Activated naive CD4-positive, alpha-beta T cell treated with anti-CD3 and anti-CD28 coated beads for 36 hours (primary cell): ENCODE measurements at regions of chr2 and their contacts with region 1.

Region 1: GRCh38 chr2:28452534-28453081 is 43.3 kb upstream of the PLB1 start:
- DNase-seq: peak; percentile 91
- H3K4me3 Mint-ChIP-seq: no peak overlapping the region
- H3K27ac Mint-ChIP-seq: no peak overlapping the region
- H3K4me1 Mint-ChIP-seq: peaks cover 36% of the 10 kb centered on the region
- H3K27me3 Mint-ChIP-seq: no peaks in the 10 kb centered on the region

Region 2: GRCh38 chr2:27723372-27724144 is 729.0 kb before region 1 on chr2:
- CTCF ChIA-PET with region 1: interaction called, 5 read pairs
- intact Hi-C with region 1: loop called (anchors 1 kb)
- DNase-seq: peak; percentile 53
- H3K4me3 Mint-ChIP-seq: no peak overlapping the region
- H3K27ac Mint-ChIP-seq: no peak overlapping the region
- H3K4me1 Mint-ChIP-seq: peaks cover 24% of the 10 kb centered on the region
- H3K27me3 Mint-ChIP-seq: no peaks in the 10 kb centered on the region

Region 3: DNA sequence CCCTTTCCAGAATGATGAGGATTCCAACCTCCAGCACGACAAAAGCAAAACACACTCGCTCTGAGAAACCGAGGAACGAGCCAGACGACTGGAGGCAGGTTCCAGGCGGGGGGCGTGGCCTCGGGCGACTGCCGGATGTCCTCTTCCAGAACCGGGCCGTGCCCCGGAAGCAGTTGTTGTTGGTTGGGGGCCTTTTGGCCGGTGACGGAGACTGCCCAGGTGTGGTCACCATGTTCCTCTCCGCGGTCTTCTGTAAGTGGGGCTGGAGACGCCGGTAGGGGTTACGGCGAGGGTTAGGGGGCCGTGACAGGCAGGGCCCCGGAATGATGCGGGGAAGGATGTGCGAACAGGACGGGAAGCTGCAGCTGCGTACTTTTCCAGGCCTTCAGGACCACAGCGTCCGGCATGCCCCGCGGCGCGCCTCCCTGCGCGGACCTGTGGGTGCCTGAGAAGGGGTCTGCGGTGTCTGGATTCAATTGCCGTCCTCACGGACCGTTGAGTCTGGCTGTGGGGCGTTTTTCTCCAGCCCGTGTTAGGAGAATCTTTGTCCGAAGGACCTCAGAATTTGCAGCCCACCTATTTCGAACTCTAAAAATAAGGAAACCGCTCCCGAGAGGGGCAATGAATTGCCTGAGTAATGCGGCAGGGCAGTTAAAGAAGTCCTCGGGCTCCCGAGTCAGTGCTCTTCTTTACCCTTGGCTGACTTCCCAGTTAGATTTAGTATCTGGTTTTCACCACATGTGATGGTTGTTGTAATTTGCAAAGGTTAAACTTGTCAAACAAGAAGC is 680.9 kb before region 1 on chr2 and contains the start of gene MRPL33:
- CTCF ChIA-PET with region 1: no interaction called
- intact Hi-C with region 1: loop called (anchors 5 kb)
- DNase-seq: peak; percentile 95
- H3K4me3 Mint-ChIP-seq: peak within 1 kb of the TSS; percentile 98
- H3K27ac Mint-ChIP-seq: peak within 1 kb of the TSS; percentile 98
- H3K4me1 Mint-ChIP-seq: peaks cover 36% of the 10 kb centered on the region
- H3K27me3 Mint-ChIP-seq: no peaks in the 10 kb centered on the region
- total RNA-seq, gene MRPL33: 57.4 to 60.5 TPM

Region 4: GRCh38 chr2:28096421-28096820 is 356.2 kb before region 1 on chr2:
- CTCF ChIA-PET with region 1: no interaction called
- intact Hi-C with region 1: loop called (anchors 10 kb)
- DNase-seq: no peak
- H3K4me3 Mint-ChIP-seq: no peak overlapping the region
- H3K27ac Mint-ChIP-seq: no peak overlapping the region
- H3K4me1 Mint-ChIP-seq: no peaks in the 10 kb centered on the region
- H3K27me3 Mint-ChIP-seq: no peaks in the 10 kb centered on the region

Region 5: DNA sequence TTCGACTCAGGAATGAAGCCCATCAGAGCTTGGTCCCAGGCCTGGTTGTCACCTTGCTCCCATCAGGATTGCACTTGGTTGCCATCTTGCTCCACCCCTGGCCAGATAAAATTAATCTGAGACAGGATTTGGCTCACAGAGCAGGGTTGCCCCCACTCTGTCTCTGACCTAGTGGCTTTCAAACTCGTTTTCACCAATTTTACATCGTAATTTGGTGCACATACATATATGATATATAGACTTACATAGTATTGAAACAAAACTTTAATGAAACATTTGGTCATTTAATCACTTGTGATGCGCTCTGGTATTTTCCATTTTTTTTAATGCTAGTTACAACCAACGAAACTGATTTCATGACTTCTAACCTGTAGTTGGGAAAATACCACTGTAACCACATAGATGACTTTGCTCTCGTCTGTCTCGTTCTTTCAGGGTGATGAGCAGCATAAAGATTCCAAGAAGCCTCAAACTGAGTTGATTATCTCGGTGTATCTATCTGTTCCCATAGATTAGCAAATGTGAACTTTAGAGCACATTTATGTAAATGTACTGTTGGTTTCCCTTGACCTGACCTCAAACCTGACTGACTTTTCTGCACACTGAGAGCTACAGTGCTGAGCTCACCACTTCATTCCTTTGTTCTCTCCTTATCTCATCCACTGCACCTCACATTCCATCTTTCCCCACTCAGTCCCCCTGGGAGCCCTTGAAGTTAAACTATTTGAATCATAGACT is 12.7 kb after region 1 on chr2:
- CTCF ChIA-PET with region 1: interaction called, 5 read pairs
- intact Hi-C with region 1: loop called (anchors 1 kb)
- DNase-seq: no peak
- H3K4me3 Mint-ChIP-seq: no peak overlapping the region
- H3K27ac Mint-ChIP-seq: peak overlapping the region; percentile 33
- H3K4me1 Mint-ChIP-seq: peaks cover 26% of the 10 kb centered on the region
- H3K27me3 Mint-ChIP-seq: peaks cover 6% of the 10 kb centered on the region

Region 6: DNA sequence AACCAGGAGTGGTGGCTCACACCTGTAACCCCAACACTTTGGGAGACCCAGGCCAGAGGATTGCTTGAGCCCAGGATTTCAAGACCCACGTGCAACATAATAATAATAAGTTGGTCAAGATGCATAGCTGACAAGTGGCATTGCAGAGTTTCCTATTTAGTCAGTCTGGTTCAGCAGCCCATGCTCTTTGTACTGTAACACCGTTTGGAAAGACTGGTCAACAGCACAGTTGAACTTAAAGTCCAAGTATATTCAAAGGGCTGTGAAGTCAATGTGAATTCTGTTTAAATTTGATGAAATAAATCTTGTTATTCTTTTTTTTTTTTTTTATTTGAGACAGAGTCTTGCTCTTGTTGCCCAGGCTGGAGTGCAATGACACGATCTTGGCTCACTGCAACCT is 419.0 kb after region 1 on chr2:
- CTCF ChIA-PET with region 1: no interaction called
- intact Hi-C with region 1: no loop called
- DNase-seq: no peak
- H3K4me3 Mint-ChIP-seq: no peak overlapping the region
- H3K27ac Mint-ChIP-seq: no peak overlapping the region
- H3K4me1 Mint-ChIP-seq: peaks cover 21% of the 10 kb centered on the region
- H3K27me3 Mint-ChIP-seq: peaks cover 5% of the 10 kb centered on the region